Common myeloid progenitor, CD34-positive (primary cell): ENCODE measurements at regions of chr2 and their contacts with region 1.

Region 1: DNA sequence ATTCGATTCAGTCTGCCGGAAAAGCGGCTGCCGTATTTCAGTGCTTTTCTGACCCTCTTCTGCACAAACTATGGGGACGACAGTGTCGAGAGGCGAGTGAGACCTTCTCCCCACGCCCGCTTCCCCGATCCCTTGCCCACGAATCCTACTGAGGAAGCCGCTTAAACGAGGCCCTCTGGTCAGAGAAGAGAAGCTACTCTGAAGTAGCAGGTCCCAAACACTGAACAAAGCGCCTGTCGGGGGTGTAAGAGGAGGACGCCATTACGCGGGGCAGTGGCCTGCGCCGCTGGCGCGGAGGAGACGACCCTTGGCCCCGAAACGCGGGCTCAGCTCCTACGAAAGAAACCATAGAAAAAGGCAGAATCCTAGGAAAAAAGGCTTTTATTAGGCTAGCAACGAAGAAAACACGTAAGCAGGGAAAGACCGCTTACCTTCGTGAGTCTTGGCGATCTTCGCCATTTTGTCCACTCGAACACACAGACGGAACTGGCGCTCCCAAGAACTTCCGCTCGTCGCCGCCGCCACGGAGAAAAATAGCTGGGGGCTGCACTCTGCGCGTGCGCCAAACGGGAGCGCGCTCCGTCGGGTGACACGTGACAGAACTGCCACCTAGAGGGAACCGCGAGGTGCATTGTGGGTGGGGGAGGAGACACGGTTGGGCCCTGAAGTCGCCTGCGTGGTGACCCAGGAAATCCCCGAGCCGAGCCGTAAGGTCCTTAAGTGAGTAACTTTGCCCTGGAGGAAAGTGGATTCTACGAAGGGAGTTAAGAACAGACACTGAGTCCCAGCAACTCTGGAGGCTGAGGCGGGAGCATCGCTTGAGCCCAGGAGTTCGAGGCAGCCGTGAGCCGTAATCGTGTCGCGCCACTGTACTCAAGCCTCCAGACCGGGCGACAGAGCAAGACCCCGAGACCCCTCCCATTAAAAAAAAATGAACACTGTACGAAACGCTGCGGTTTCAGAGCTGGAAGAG is at the start of gene SF3B1:
- DNase-seq: peak; percentile 99 to 100 (median 100)
- H3K4me3 ChIP-seq: peak within 1 kb of the TSS; percentile 89 to 100 (median 100)
- H3K27ac ChIP-seq: peak within 1 kb of the TSS; percentile 100
- H3K4me1 ChIP-seq: peaks cover 25 to 47% (median 38%) of the 10 kb centered on the region in 4 experiments
- H3K27me3 ChIP-seq: no peaks in the 10 kb centered on the region

Region 2: DNA sequence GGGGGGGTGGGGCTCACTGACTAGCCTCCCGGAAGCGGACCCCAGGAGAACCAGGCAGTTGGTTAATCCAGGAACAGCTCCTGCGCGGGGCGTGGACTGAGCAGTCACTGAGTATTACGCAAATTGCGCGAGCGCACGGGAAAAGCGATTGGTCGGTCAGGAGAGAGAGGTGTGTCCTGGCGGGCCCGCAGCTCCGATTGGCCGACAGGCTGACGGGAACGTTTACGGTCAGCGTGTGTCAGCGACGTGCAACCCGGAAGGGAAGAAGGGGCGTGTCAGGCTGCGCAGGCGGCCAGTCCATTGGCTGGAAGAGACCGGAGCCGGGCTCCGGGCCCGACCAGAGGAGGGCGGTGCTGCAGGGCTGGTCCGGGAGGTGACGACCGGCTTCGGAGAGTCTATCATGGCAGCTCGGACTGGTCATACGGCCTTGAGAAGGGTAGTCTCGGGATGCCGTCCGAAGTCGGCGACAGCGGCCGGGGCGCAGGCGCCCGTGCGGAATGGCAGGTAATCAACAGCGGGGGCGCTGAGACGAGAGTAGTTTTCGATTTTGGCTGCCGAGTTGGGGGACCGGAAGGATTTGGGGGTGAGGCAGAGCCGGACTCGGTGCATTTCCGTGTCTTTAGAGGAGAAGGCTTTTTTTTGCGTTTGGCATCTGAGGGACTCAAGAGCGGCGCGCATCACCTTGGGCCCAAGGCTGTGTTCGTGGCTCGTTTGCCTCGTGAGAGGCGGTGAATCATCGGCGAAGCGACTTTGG is 18.5 kb after region 1 on chr2 and contains the start of gene COQ10B:
- CTCF ChIA-PET with region 1: interaction called, 6 read pairs
- POLR2A ChIA-PET with region 1: interaction called, 48 read pairs
- DNase-seq: peak; percentile 100
- H3K4me3 ChIP-seq: peak within 1 kb of the TSS; percentile 85 to 100 (median 96)
- H3K27ac ChIP-seq: peak within 1 kb of the TSS; percentile 99
- H3K4me1 ChIP-seq: peaks cover 10 to 21% (median 15%) of the 10 kb centered on the region in 4 experiments
- H3K27me3 ChIP-seq: no peaks in the 10 kb centered on the region

Region 3: DNA sequence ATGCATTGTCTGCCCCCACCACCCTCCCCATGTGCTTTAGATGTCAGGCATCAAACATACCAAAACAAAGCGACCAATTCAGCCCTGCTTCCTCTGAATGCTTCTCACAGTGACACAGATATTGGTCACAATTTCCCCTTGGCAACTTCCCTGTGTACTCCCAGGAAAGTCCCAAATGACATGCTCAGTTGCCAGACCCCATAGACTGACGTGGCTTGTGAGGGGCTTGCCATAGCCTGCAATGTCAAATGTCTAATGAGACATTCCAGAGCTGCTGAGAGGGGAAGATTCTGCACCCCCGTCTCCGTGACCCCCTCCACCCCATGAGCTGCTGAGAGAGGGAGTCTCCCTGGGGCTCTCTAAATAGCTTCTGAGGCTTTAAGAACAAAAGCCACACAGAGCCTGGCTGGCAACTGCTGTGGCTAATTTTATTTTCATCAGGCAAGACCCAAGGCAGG is 193.2 kb after region 1 on chr2:
- CTCF ChIA-PET with region 1: no interaction called
- POLR2A ChIA-PET with region 1: no interaction called
- DNase-seq: peak in 2 of 3 donors; percentile 2 to 7
- H3K4me3 ChIP-seq: no peak overlapping the region
- H3K27ac ChIP-seq: no peak overlapping the region
- H3K4me1 ChIP-seq: no peaks in the 10 kb centered on the region
- H3K27me3 ChIP-seq: no peaks in the 10 kb centered on the region